ENCODE measurements at regions of chr11 and their contacts with region 1.

Region 1: DNA sequence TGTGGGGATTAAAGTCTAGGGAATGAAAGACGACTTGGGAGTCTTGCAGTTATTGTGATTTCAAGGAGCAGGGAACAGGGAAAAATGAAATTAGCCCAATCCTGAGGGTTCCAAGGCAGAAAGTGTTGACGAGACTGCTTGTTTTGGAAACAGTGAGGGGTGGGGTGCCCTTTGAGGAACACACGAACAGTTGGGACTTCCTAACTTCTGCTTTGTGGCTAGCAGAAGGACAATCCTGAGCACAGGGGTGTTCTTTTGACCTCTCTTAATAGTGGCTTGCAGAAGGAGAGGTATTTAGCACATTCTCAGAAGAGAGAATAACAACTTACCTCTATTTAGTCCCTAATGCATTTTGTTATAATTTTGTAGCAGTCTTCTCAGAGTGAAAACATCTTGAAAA is 545.9 kb upstream of the ARHGAP42 start:
- DNase-seq: no peak
- ATAC-seq: no peak
- H3K4me3 ChIP-seq: no peak overlapping the region
- H3K27ac ChIP-seq: no peak overlapping the region
- H3K4me1 ChIP-seq: no peaks in the 10 kb centered on the region
- H3K27me3 ChIP-seq: no peaks in the 10 kb centered on the region
- CTCF ChIP-seq: no peak
- POLR2A ChIP-seq: no peak
- RAD21 ChIP-seq: no peak

Region 2: GRCh38 chr11:100008417-100008816 is 132.8 kb before region 1 on chr11:
- CTCF ChIA-PET with region 1: no interaction called
- POLR2A ChIA-PET with region 1: interaction called, 22 read pairs
- dilution Hi-C with region 1: no loop called
- in situ Hi-C with region 1: no loop called
- intact Hi-C with region 1: no loop called
- DNase-seq: no peak
- ATAC-seq: no peak
- H3K4me3 ChIP-seq: no peak overlapping the region
- H3K27ac ChIP-seq: no peak overlapping the region
- H3K4me1 ChIP-seq: no peaks in the 10 kb centered on the region
- H3K27me3 ChIP-seq: no peaks in the 10 kb centered on the region
- CTCF ChIP-seq: no peak
- POLR2A ChIP-seq: no peak
- RAD21 ChIP-seq: no peak

Region 3: GRCh38 chr11:100031973-100032372 is 109.2 kb before region 1 on chr11:
- CTCF ChIA-PET with region 1: no interaction called
- POLR2A ChIA-PET with region 1: no interaction called
- dilution Hi-C with region 1: no loop called
- in situ Hi-C with region 1: no loop called
- intact Hi-C with region 1: no loop called
- DNase-seq: no peak
- ATAC-seq: no peak
- H3K4me3 ChIP-seq: no peak overlapping the region
- H3K27ac ChIP-seq: no peak overlapping the region
- H3K4me1 ChIP-seq: no peaks in the 10 kb centered on the region
- H3K27me3 ChIP-seq: no peaks in the 10 kb centered on the region
- CTCF ChIP-seq: no peak
- POLR2A ChIP-seq: no peak
- RAD21 ChIP-seq: no peak

Measured in IMR-90 (cell line).